PC-3 (cell line): ENCODE measurements at regions of chr6 and their contacts with region 1.

Region 1: GRCh38 chr6:13795041-13795750 is 19.2 kb downstream of the MCUR1 start:
- DNase-seq: peak; percentile 95
- ATAC-seq: peak; percentile 86
- H3K4me3 ChIP-seq: no peak overlapping the region
- H3K27ac ChIP-seq: peak overlapping the region; percentile 71
- H3K4me1 ChIP-seq: peaks cover 31% of the 10 kb centered on the region
- H3K27me3 ChIP-seq: no peaks in the 10 kb centered on the region
- CTCF ChIP-seq: peak; percentile 94

Region 2: GRCh38 chr6:12060780-12061619 is 1734.2 kb before region 1 on chr6:
- CTCF ChIA-PET with region 1: no interaction called
- POLR2A ChIA-PET with region 1: no interaction called
- intact Hi-C with region 1: no loop called
- DNase-seq: no peak
- ATAC-seq: no peak
- H3K4me3 ChIP-seq: no peak overlapping the region
- H3K27ac ChIP-seq: no peak overlapping the region
- H3K4me1 ChIP-seq: peaks cover 12% of the 10 kb centered on the region; the same call in 1 of the 2 replicates
- H3K27me3 ChIP-seq: no peaks in the 10 kb centered on the region
- CTCF ChIP-seq: no peak

Region 3: GRCh38 chr6:13614926-13615798 is 180.0 kb before region 1 on chr6 and contains the start of gene NOL7:
- CTCF ChIA-PET with region 1: no interaction called
- POLR2A ChIA-PET with region 1: no interaction called
- intact Hi-C with region 1: loop called (anchors 5 kb)
- DNase-seq: peak; percentile 98
- ATAC-seq: peak; percentile 87
- H3K4me3 ChIP-seq: peak within 1 kb of the TSS; percentile 86
- H3K27ac ChIP-seq: peak within 1 kb of the TSS; percentile 62
- H3K4me1 ChIP-seq: peaks cover 22% of the 10 kb centered on the region
- H3K27me3 ChIP-seq: no peaks in the 10 kb centered on the region
- CTCF ChIP-seq: peak; percentile 89
- total RNA-seq, gene NOL7: 95.4 and 163 TPM in 2 replicates

Region 4: DNA sequence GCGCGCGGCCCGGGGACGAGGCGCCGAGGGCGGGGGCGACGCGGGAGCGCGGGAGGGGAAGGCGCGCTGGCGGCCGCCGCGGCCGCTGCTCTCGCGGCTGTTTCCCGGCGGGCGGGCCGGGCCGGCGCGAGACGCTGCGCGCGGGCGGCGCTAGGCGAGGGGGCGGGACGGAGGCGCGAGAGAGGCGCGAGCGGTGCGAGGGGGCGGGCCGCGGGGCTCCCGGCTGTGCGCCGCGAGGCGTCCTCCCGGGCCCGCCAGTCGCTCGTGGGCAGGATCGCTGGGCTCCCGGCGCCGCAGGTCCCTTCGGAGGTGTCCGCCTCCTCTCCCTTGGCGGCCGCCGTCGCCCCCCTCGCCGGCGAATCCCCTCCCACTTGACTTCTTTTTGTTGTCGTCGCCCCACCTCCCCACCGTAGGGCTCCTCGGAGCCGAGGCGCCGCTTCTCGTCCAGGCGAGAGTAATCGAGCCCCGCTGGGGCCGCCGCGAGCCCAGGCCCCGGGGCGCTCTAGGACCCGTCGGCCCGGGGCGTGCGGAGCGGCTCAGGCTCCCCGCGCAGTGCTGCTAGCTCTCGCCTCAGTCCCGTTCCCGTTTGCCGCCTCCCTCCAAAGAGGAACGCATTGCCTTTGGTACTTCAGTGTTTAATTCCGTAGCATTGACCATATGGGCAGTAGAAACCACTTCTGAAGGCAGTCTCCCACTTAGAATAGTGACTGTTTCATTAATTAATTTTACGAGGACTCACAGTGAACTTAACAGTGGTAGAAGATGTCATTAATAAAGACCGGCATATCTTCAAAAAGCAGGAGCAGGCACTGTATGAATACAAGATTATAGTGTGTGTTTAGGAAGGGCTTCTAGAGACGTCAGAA is 83.2 kb before region 1 on chr6 and contains the start of gene RANBP9:
- CTCF ChIA-PET with region 1: interaction called, 4 read pairs
- POLR2A ChIA-PET with region 1: no interaction called
- intact Hi-C with region 1: loop called (anchors 1 kb)
- DNase-seq: peak; percentile 88
- ATAC-seq: peak; percentile 78
- H3K4me3 ChIP-seq: peak within 1 kb of the TSS; percentile 87
- H3K27ac ChIP-seq: peak within 1 kb of the TSS; percentile 80
- H3K4me1 ChIP-seq: peaks cover 32% of the 10 kb centered on the region
- H3K27me3 ChIP-seq: no peaks in the 10 kb centered on the region
- CTCF ChIP-seq: no peak
- total RNA-seq, gene RANBP9: 25.8 and 27.9 TPM in 2 replicates

Region 5: GRCh38 chr6:13725570-13725969 is 69.6 kb before region 1 on chr6:
- CTCF ChIA-PET with region 1: no interaction called
- POLR2A ChIA-PET with region 1: no interaction called
- intact Hi-C with region 1: loop called (anchors 1 kb)
- DNase-seq: peak; percentile 99
- ATAC-seq: peak; percentile 57
- H3K4me3 ChIP-seq: peak overlapping the region; percentile 16; the same call in 1 of the 2 replicates
- H3K27ac ChIP-seq: peak overlapping the region; percentile 90
- H3K4me1 ChIP-seq: peaks cover 71% of the 10 kb centered on the region
- H3K27me3 ChIP-seq: no peaks in the 10 kb centered on the region
- CTCF ChIP-seq: no peak

Region 6: DNA sequence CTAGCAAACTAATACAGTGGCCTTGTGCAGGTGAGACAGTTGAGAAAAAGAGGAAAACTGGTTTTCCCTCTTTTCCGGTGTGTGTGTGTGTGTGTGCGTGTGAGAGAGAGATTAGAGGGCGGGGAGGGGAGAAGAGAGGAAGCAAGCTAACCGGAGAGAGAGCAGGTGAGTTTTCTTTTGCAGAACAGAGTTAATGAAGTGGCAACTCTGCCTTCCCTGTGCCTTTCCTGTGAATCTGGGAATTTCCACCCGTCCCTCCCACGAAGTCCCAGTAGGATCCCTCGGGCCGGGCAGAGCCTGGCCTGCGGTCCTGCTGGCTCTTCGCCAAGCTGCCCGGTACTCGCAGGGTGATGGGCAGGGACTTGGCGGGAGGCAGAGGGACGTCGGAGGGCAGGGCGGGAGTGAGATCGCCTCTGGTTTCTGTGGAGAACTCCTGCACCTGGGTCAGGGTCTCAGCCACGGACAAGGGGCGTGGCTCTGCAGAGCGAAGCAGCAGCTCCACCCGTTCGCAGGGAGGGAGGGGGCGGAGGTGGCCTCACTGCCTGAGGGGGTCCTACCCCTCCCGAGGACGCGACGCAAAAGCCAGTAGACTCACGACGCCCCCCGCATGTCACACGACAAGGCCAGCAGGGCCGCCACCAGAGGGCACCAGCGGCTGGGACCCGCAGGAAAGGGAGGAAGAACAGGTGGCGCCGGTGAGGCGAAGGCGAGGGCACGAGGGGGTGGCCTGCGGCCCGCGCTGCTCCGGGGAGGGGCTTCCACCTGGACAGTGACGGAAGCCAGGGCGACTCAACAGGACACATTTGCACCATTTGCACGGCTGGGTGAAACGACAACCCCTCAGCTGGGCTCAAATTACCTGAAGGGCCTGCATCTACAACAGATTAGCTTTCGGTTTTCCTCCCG is 78.3 kb after region 1 on chr6:
- CTCF ChIA-PET with region 1: no interaction called
- POLR2A ChIA-PET with region 1: no interaction called
- intact Hi-C with region 1: loop called (anchors 1 kb)
- DNase-seq: peak; percentile 79
- ATAC-seq: peak; percentile 85
- H3K4me3 ChIP-seq: peak overlapping the region; percentile 64
- H3K27ac ChIP-seq: peak overlapping the region; percentile 26
- H3K4me1 ChIP-seq: peaks cover 18% of the 10 kb centered on the region
- H3K27me3 ChIP-seq: no peaks in the 10 kb centered on the region
- CTCF ChIP-seq: peak; percentile 99

Region 7: DNA sequence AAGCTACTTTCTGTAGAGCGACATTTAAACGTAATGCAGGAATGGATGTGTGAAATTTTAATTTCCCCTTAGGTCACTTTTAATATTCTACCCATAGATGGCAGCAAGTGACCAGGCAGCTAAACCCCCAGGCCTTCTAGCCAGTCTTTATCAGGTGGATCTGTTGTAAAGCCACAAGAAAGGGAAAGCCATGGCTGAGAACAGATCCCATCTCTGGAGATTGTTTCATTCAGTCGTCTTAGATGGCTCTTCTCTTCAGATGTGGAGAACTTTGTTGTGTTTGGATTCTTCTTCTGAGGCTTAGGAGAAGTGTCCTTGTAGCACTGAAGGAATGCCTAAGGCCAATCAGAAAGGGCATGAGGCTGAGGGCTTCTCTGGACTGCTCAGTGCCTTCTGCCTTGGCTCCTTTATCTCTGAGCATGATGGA is 113.8 kb after region 1 on chr6:
- CTCF ChIA-PET with region 1: no interaction called
- POLR2A ChIA-PET with region 1: interaction called, 8 read pairs
- intact Hi-C with region 1: loop called (anchors 5 kb)
- DNase-seq: peak; percentile 82
- ATAC-seq: peak; percentile 88
- H3K4me3 ChIP-seq: no peak overlapping the region
- H3K27ac ChIP-seq: no peak overlapping the region
- H3K4me1 ChIP-seq: peaks cover 23% of the 10 kb centered on the region
- H3K27me3 ChIP-seq: no peaks in the 10 kb centered on the region
- CTCF ChIP-seq: peak; percentile 93

Region 8: DNA sequence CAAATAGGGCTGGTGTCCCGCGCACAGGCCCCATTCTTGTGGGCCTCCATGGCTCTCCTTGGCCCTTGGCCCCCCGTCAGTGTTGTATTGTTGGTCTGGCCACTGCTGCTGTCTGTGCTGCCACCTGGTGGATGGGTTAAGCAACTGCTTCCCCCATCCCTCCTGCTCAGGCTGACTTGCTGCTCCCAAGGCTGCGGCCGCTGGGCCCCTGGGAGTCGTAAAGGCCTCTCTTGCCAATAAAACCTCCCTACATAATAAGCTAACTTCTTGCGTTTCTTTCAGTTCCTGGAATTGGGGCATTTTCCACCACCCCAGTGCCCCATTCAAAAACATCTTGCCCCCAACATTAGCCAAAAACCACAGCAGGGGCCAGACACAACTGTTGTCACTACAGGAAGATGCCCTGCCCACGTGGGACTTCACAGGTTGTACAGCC is 349.5 kb after region 1 on chr6:
- CTCF ChIA-PET with region 1: no interaction called
- POLR2A ChIA-PET with region 1: no interaction called
- intact Hi-C with region 1: loop called (anchors 1 kb)
- DNase-seq: peak; percentile 77
- ATAC-seq: peak; percentile 98
- H3K4me3 ChIP-seq: no peak overlapping the region
- H3K27ac ChIP-seq: no peak overlapping the region
- H3K4me1 ChIP-seq: no peaks in the 10 kb centered on the region
- H3K27me3 ChIP-seq: no peaks in the 10 kb centered on the region
- CTCF ChIP-seq: peak; percentile 95